Stomach (tissue), 19 donors: ENCODE measurements at regions of chr4 and their contacts with region 1.

Region 1: DNA sequence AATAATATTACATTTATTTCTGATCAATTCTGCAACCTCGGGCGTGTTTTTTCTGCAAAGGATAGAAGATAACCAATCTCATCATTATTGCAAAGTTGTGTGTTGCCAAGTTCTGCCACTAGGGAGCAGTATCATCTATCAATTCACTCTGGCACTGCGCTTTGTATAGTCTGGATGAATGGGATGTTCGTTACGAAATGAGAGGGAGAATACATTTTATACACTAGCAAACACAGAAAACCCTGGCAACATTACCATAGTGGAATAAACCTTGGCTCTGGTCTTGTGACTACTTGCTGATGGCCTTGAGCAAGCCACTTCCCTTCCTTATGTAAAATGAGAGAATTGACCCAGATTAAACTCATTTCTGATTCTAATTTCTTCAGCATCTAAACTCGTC is 97.5 kb upstream of the ZNF518B start:
- DNase-seq: peak; percentile 35 to 80
- H3K4me3 ChIP-seq: no peak overlapping the region
- H3K27ac ChIP-seq: no peak overlapping the region
- H3K4me1 ChIP-seq: peaks cover 0 to 7% (median 2%) of the 10 kb centered on the region in 4 donors
- H3K27me3 ChIP-seq: peaks cover 0 to 8% (median 0%) of the 10 kb centered on the region in 3 donors
- CTCF ChIP-seq: peak in 5 of 7 experiments; percentile 48 to 75 (median 73)
- EP300 ChIP-seq: no peak
- POLR2A ChIP-seq: no peak

Region 2: GRCh38 chr4:10164877-10165283 is 389.8 kb before region 1 on chr4:
- intact Hi-C with region 1: loop called (anchors 10 kb)
- DNase-seq: peak; percentile 37 to 62
- H3K4me3 ChIP-seq: no peak overlapping the region
- H3K27ac ChIP-seq: no peak overlapping the region
- H3K4me1 ChIP-seq: peaks cover 0 to 24% (median 18%) of the 10 kb centered on the region in 4 donors
- H3K27me3 ChIP-seq: no peaks in the 10 kb centered on the region
- CTCF ChIP-seq: peak in 5 of 7 experiments; percentile 17 to 59 (median 44)
- EP300 ChIP-seq: no peak
- POLR2A ChIP-seq: no peak